A549 (cell line): ENCODE measurements at regions of chr3 and their contacts with region 1.

Region 1: GRCh38 chr3:122392868-122393844 is 9.2 kb downstream of the FAM162A start:
- DNase-seq: peak; percentile 43 to 60
- ATAC-seq: peak; percentile 50 to 67; a peak in 3 of 6 replicates
- H3K4me3 ChIP-seq: no peak overlapping the region
- H3K27ac ChIP-seq: no peak overlapping the region
- H3K4me1 ChIP-seq: no peaks in the 10 kb centered on the region
- CTCF ChIP-seq: peak; percentile 75
- EP300 ChIP-seq: no peak
- POLR2A ChIP-seq: no peak
- RAD21 ChIP-seq: peak; percentile 76 to 78

Region 2: GRCh38 chr3:122403489-122403888 is 10.3 kb after region 1 on chr3:
- CTCF ChIA-PET with region 1: interaction called, 21 read pairs
- POLR2A ChIA-PET with region 1: no interaction called
- DNase-seq: no peak
- ATAC-seq: no peak
- H3K4me3 ChIP-seq: no peak overlapping the region
- H3K27ac ChIP-seq: no peak overlapping the region
- H3K4me1 ChIP-seq: no peaks in the 10 kb centered on the region
- CTCF ChIP-seq: no peak
- EP300 ChIP-seq: no peak
- POLR2A ChIP-seq: no peak
- RAD21 ChIP-seq: no peak

Region 3: GRCh38 chr3:122409446-122409845 is 16.3 kb after region 1 on chr3:
- CTCF ChIA-PET with region 1: interaction called, 21 read pairs
- POLR2A ChIA-PET with region 1: no interaction called
- DNase-seq: no peak
- ATAC-seq: no peak
- H3K4me3 ChIP-seq: no peak overlapping the region
- H3K27ac ChIP-seq: no peak overlapping the region
- H3K4me1 ChIP-seq: peaks cover 6% of the 10 kb centered on the region; the same call in 1 of the 3 replicates
- CTCF ChIP-seq: no peak
- EP300 ChIP-seq: no peak
- POLR2A ChIP-seq: no peak
- RAD21 ChIP-seq: no peak

Region 4: GRCh38 chr3:122415720-122416654 is 22.8 kb after region 1 on chr3 and contains the start of gene WDR5B:
- CTCF ChIA-PET with region 1: interaction called, 8 read pairs
- POLR2A ChIA-PET with region 1: interaction called, 11 read pairs
- DNase-seq: peak; percentile 98
- ATAC-seq: peak; percentile 95 to 98
- H3K4me3 ChIP-seq: peak within 1 kb of the TSS; percentile 74
- H3K27ac ChIP-seq: peak within 1 kb of the TSS; percentile 87 to 90
- H3K4me1 ChIP-seq: peaks cover 16% of the 10 kb centered on the region
- CTCF ChIP-seq: no peak
- EP300 ChIP-seq: no peak
- POLR2A ChIP-seq: peak; percentile 62
- RAD21 ChIP-seq: 0 out of 5 replicates have a peak, but pooled peaks of 1 of the 2 experiments have one; percentile 1
- polyA plus RNA-seq, gene WDR5B: 9.0 and 10.2 TPM in 2 replicates